ENCODE measurements at regions of chr16 and their contacts with region 1.

Region 1: GRCh38 chr16:8936421-8936820 is 27.3 kb downstream of the USP7 start:
- DNase-seq: peak; percentile 92
- H3K4me3 Mint-ChIP-seq: no peak overlapping the region
- H3K27ac Mint-ChIP-seq: peak overlapping the region; percentile 73
- H3K4me1 Mint-ChIP-seq: peaks cover 81% of the 10 kb centered on the region
- H3K27me3 Mint-ChIP-seq: no peaks in the 10 kb centered on the region

Region 2: DNA sequence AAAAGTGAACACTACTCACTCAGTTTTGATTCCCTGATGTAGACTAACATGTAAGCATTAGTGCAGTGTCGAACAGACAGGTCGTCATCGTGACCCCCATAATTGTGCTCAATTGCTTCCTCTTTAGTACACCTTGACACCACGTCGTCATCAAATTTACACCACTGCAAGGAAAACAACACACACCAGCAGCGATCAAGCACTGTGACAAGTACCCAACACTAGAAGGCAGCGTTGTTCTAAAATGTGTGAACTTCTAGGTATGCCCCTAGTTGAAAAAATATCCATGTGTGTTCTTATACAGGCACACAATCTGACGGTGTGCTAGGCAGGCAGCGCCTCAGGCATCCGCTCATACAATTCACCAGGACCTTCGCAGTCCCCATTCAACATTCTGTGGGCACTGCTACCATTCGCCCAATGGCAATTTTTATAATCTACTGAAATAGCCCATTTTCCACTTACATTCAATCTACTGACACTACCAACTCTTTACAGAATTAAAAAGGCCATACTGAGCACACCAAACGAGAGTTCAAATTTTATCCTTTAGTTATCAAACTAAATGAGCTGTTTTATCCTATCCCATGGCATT is 31.2 kb before region 1 on chr16:
- CTCF ChIA-PET with region 1: interaction called, 14 read pairs
- intact Hi-C with region 1: loop called (anchors 1 kb)
- DNase-seq: peak; percentile 26
- H3K4me3 Mint-ChIP-seq: no peak overlapping the region
- H3K27ac Mint-ChIP-seq: no peak overlapping the region
- H3K4me1 Mint-ChIP-seq: peaks cover 14% of the 10 kb centered on the region
- H3K27me3 Mint-ChIP-seq: no peaks in the 10 kb centered on the region

Region 3: DNA sequence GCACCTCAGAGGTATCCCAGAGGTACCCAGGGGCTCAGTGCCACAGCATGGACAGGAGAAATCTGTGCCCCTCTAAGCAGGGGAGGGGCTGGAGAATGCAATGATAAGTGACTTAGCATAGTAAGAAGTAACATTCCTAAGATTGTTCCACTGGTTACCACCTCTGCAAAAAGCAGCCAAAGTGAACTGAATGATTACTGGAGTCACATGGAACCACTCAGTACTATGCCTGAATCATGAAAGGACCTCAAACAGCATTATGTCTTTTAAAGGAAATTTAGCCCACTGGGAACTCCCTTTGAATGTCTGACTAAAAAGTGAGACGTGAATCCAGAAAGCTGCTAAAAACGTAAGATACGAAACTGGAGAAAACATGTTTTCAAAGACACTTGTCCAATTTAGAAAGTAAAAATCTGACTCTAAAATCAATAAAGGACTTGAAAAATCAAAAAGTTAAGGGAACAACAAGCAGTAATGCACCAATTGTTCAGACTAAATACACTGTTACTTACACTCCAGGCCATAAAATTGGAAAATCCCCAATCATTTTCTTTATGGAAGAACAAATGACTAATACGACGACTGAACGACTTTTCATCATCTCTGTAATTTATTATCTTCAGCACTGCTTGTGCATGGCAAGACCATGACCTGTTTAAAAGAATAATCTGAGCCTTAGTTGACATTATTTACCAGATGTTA is 15.6 kb before region 1 on chr16:
- CTCF ChIA-PET with region 1: interaction called, 18 read pairs
- intact Hi-C with region 1: loop called (anchors 2 kb)
- DNase-seq: no peak
- H3K4me3 Mint-ChIP-seq: no peak overlapping the region
- H3K27ac Mint-ChIP-seq: peak overlapping the region; percentile 63
- H3K4me1 Mint-ChIP-seq: peaks cover 53% of the 10 kb centered on the region
- H3K27me3 Mint-ChIP-seq: no peaks in the 10 kb centered on the region

Region 4: GRCh38 chr16:8958344-8959167 is 22.1 kb after region 1 on chr16:
- CTCF ChIA-PET with region 1: interaction called, 12 read pairs
- intact Hi-C with region 1: loop called (anchors 2 kb)
- DNase-seq: peak; percentile 55
- H3K4me3 Mint-ChIP-seq: peak overlapping the region; percentile 44
- H3K27ac Mint-ChIP-seq: no peak overlapping the region
- H3K4me1 Mint-ChIP-seq: peaks cover 81% of the 10 kb centered on the region
- H3K27me3 Mint-ChIP-seq: no peaks in the 10 kb centered on the region

Region 5: GRCh38 chr16:9134739-9135138 is 198.3 kb after region 1 on chr16:
- CTCF ChIA-PET with region 1: interaction called, 5 read pairs
- intact Hi-C with region 1: loop called (anchors 1 kb)
- DNase-seq: peak; percentile 85
- H3K4me3 Mint-ChIP-seq: no peak overlapping the region
- H3K27ac Mint-ChIP-seq: no peak overlapping the region
- H3K4me1 Mint-ChIP-seq: peaks cover 7% of the 10 kb centered on the region
- H3K27me3 Mint-ChIP-seq: peaks cover 4% of the 10 kb centered on the region